ENCODE measurements at regions of chr16 and their contacts with region 1.

Region 1: DNA sequence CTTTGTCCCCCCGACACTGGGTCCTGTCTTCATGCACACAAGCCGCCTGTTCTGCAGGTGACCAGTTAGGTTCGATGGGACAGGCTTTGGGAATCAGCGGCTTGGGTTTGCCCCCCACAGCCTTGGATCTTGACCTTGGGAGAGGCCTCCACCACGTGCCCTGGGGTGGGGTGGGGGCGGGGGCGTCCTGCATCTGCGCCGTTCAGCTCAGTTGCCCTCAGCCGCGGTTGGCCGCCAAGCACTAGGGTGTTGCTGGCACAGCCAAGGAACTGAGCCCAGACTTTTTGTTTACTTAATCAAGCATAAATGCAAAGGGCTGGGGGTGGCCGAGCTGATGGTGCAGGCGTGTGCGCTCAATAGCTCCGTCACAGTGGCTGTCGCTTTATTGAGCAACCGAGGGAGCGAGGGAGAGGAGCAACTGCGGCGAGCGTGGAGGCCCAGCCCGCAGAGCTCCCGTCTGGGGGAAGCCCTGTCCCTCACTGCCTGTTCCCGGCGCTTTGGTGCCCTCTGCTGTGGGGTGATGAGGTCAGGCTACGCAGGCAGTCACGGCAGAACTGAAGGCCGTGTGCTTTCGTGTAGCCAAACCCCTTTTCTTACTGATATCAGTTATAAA is 33.9 kb downstream of the JPH3 start:
- DNase-seq: peak; percentile 7
- H3K4me3 ChIP-seq: no peak overlapping the region
- CTCF ChIP-seq: peak; percentile 85

Region 2: DNA sequence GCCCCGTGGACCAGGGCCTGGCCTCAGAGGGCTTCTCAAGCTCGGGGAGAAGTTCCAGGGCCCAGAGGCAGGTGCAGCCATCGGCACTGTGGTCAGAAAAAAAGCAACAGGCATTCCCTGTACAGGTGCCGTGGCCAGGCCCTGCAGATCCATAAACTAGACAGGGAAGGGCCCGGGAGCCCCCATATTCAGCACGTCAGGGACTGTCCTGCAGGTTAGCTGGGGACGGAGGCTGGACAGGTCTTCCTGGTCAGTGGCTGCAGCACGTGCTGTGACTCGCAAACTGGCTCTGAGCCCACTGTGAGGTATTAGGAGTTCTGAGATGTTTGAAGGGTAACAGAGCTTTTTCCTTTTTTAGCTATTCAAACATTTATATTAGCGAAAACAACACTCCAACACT is 304.0 kb before region 1 on chr16:
- CTCF ChIA-PET with region 1: no interaction called
- POLR2A ChIA-PET with region 1: no interaction called
- DNase-seq: no peak
- H3K4me3 ChIP-seq: no peak overlapping the region
- CTCF ChIP-seq: no peak

Region 3: DNA sequence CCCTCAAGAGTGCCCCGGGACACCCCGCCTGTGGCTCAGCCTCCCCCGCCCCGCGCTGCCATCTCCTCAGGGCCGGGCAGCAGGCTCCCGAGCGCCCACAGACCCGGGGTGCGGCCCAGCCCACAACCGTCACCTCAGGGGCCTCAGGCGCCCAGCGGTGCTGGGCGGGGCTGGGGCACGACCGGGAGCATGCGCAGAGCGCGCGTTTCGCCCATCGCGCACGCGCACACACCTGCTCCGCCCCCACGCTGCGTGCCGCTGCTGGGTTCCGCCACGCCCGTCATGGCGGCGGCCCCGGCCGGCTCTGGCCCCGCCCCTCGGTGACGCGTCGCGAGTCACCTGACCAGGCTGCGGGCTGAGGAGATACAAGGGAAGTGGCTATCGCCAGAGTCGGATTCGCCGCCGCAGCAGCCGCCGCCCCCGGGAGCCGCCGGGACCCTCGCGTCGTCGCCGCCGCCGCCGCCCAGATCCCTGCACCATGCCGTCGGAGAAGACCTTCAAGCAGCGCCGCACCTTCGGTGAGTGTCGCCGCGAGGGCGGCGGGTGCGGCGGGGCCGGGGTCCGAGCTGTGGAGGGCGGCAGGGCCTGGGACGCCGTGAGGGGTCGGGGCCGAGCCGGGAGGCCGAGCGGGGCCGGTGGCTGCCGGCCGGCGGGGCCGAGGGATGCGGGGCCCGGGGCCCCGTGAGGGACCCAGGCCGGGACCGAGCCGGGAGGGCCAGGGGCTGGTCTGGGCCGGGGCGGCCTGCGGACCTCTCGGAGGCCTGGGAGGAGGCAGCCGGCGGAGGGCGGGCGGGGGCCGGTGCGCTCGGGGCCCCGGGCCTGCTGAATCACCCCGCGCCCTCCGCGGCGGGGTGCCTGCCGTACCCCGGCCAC is 244.0 kb before region 1 on chr16 and contains the start of gene MAP1LC3B:
- CTCF ChIA-PET with region 1: interaction called, 53 read pairs
- POLR2A ChIA-PET with region 1: no interaction called
- DNase-seq: peak; percentile 59
- H3K4me3 ChIP-seq: peak within 1 kb of the TSS; percentile 81
- CTCF ChIP-seq: no peak

Region 4: GRCh38 chr16:87426423-87427215 is 209.6 kb before region 1 on chr16:
- CTCF ChIA-PET with region 1: interaction called, 37 read pairs
- POLR2A ChIA-PET with region 1: no interaction called
- DNase-seq: no peak
- H3K4me3 ChIP-seq: no peak overlapping the region
- CTCF ChIP-seq: no peak

Region 5: DNA sequence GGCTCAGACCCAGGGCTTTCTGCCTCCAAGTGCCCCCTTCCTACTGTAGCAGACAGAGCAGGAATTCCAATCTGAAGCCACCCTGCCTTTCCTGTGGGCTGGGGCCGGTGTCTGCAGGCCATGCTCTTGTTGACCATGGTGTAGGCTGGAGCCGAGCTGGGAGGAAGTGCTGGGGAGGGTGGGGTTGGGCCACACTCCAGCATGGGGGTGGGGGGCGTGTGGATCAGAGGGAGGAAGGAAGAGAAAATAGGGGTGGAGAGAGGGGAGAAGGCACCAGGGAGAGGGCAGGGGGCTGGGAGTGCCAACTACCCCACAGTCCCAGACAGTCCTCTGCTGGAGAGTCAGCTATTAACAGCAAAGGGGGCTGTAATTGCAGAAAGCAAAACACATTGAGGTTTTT is 88.1 kb before region 1 on chr16:
- CTCF ChIA-PET with region 1: interaction called, 20 read pairs
- POLR2A ChIA-PET with region 1: no interaction called
- DNase-seq: no peak
- H3K4me3 ChIP-seq: no peak overlapping the region
- CTCF ChIP-seq: no peak

Region 6: GRCh38 chr16:87620201-87620495 is 16.0 kb before region 1 on chr16:
- CTCF ChIA-PET with region 1: interaction called, 29 read pairs
- POLR2A ChIA-PET with region 1: no interaction called
- DNase-seq: no peak
- H3K4me3 ChIP-seq: no peak overlapping the region
- CTCF ChIP-seq: no peak

Measured in AG04449 (cell line).